ENCODE measurements at regions of chr5 and their contacts with region 1.

Region 1: GRCh38 chr5:64147849-64148441 is 17.7 kb upstream of the RNF180 start:
- DNase-seq: no peak

Region 2: GRCh38 chr5:63911871-63912270 is 236.1 kb before region 1 on chr5:
- intact Hi-C with region 1: no loop called
- DNase-seq: no peak

Region 3: DNA sequence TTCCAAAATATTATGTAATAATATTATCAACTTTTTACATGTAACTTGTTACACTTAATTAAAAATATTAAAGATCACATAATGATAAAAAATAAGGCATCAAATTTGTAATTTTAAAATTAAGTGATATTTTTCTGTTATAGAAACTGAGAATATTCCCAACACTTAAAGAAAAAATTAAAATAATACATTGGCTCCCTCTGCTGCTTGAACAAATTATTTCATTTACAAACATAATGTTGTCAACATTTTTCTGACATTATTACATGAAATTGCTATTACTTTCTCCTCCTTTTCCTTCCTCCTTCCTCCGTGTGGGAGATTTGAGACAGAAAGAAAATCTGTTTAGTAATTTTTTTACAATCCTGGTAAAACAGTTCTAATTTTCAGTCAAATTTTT is 60.0 kb after region 1 on chr5:
- intact Hi-C with region 1: loop called (anchors 2 kb)
- DNase-seq: no peak

Region 4: DNA sequence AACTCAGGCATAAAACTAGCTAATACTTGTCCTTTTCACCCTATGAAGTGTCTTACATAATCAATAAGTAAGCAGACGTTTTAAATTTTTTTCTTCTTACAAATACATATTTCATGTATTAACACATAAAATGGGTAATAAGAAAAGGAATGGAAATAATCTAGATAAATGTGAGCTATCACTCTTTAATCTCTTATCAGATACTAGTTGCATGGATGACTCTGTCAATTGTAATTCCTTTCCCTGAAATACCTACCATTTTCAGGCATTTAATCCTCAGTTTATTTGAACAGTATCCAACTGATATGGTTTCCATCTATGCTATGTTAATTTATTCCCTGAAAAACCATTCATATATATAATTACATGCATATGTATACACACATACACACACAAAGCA is 191.8 kb after region 1 on chr5:
- intact Hi-C with region 1: no loop called
- DNase-seq: no peak

Region 5: DNA sequence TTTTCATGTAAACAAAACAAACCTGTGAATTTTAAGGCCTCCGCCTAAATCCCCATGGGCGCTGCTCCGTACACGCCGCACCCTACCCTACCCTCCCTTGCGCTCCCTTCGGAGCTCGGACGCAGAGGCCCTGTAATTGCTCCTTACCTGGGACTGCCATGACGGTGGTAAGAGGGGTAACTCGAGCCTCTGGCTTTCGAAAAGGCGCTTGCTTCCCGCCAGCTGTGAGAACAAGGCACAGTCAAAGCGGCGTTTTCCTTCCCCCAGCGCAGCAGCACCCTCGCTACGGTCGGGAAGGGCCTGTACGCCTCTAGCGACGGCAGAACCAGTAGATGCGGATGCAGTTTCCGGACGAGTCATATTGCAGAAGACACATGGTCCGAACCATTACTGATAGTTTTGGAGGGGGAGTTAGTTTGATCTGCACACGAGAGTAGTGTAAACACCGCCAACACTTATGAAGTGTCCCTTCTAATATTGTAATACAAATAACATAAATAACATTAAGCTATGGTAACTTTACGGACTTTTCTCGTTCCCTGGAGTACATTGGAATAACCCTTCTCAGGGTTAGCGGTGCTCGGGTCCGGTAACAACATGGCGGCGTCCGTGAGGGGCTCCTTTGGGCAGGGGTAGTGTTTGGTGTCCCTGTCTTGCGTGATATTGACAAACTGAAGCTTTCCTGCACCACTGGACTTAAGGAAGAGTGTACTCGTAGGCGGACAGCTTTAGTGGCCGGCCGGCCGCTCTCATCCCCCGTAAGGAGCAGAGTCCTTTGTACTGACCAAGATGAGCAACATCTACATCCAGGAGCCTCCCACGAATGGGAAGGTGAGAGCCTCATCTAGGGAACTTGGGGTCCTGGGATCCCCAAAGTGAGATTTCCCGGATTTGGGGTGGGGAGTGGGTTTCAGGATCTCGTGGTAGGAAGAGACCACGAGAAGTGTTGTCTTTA is 620.7 kb after region 1 on chr5 and contains the starts of genes CWC27 and SREK1IP1:
- intact Hi-C with region 1: loop called (anchors 10 kb)
- DNase-seq: peak; percentile 93
- total RNA-seq, gene CWC27: 19.9 TPM
- total RNA-seq, gene SREK1IP1: 10.2 TPM

Measured in cardiac septum (tissue), 1 donor.